ENCODE measurements at regions of chr11 and their contacts with region 1.

Region 1: GRCh38 chr11:128695539-128696221 is 1.8 kb downstream of the FLI1 start:
- DNase-seq: peak; percentile 51
- ATAC-seq: peak; percentile 32
- H3K4me3 Mint-ChIP-seq: peak overlapping the region; percentile 92
- H3K27ac Mint-ChIP-seq: peak overlapping the region; percentile 97
- H3K4me1 Mint-ChIP-seq: peaks cover 50% of the 10 kb centered on the region
- H3K27me3 Mint-ChIP-seq: peaks cover 8% of the 10 kb centered on the region
- CTCF ChIP-seq: no peak

Region 2: DNA sequence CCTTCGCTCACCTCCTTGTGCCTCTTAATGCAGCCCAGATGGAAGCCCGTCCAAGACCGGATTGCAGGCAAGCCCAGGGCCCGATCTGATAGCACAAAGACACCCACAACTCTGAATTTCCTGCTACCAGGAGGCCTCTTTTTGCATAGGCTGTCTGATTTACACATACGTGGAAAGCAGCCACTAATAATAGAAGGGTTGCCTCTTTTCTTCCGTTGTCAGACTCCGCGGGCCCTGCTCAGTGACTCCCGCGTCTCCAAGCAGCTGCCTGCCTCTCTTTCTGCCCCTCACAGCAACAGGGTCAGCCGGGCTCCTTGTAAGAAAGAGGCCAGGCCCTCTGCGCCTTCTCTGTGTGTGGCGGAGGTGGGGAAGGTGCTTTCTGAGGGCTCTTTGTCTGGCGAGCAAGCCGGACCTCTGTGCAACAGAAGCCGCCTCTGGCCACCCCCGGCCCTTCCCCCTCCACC is 24.9 kb after region 1 on chr11:
- CTCF ChIA-PET with region 1: interaction called, 4 read pairs
- POLR2A ChIA-PET with region 1: interaction called, 13 read pairs
- intact Hi-C with region 1: no loop called
- DNase-seq: peak; percentile 74
- ATAC-seq: peak; percentile 65
- H3K4me3 Mint-ChIP-seq: peak overlapping the region; percentile 78
- H3K27ac Mint-ChIP-seq: peak overlapping the region; percentile 97
- H3K4me1 Mint-ChIP-seq: peaks cover 92% of the 10 kb centered on the region
- H3K27me3 Mint-ChIP-seq: no peaks in the 10 kb centered on the region
- CTCF ChIP-seq: no peak

Region 3: GRCh38 chr11:128733440-128734102 is 37.9 kb after region 1 on chr11:
- CTCF ChIA-PET with region 1: interaction called, 4 read pairs
- POLR2A ChIA-PET with region 1: interaction called, 9 read pairs
- intact Hi-C with region 1: loop called (anchors 5 kb)
- DNase-seq: peak; percentile 58
- ATAC-seq: peak; percentile 53
- H3K4me3 Mint-ChIP-seq: peak overlapping the region; percentile 51
- H3K27ac Mint-ChIP-seq: peak overlapping the region; percentile 68
- H3K4me1 Mint-ChIP-seq: peaks cover 92% of the 10 kb centered on the region
- H3K27me3 Mint-ChIP-seq: no peaks in the 10 kb centered on the region
- CTCF ChIP-seq: no peak